SK-N-SH (cell line): ENCODE measurements at regions of chr12 and their contacts with region 1.

Region 1: DNA sequence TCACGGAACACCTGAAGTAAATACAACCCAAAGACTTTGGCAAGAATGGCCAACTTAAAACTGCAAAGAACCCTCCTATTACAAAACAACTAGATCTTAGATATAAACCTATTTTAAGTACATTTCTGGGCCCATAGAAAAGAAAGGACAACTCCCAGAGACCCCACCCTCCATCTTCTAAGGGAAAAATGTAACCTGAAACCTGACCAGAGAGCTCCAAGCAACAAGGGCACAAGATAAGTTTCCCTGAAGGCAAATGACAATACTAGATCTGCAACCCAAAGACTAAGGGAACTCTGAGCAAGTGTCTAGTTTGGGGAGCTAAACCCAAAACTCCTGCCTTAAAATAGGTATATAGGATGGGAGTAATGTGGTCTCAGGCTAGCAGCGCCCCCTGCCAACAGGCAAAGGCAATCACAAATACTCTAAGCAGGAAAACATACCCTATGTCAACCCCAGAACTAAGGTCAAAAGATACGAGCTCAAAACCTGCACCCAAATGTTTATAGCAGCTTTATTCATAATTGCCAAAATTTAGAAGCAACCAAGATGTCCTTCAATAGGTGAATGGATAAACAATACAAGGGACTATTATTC is 218.9 kb downstream of the ITPR2 start:
- DNase-seq: peak; percentile 45
- H3K4me3 ChIP-seq: no peak overlapping the region; a peak in 1 of 4 replicates
- H3K27ac ChIP-seq: no peak overlapping the region
- H3K4me1 ChIP-seq: peaks cover 0 to 5% of the 10 kb centered on the region in 2 experiments; a peak in 1 of 4 replicates
- H3K27me3 ChIP-seq: no peaks in the 10 kb centered on the region
- CTCF ChIP-seq: peak; percentile 69
- EP300 ChIP-seq: no peak
- RAD21 ChIP-seq: peak; percentile 82

Region 2: GRCh38 chr12:26126340-26127284 is 487.5 kb before region 1 on chr12:
- CTCF ChIA-PET with region 1: interaction called, 56 read pairs
- POLR2A ChIA-PET with region 1: interaction called, 3 read pairs
- DNase-seq: peak; percentile 90
- H3K4me3 ChIP-seq: peak overlapping the region; percentile 65 to 83
- H3K27ac ChIP-seq: peak overlapping the region; percentile 69 to 96
- H3K4me1 ChIP-seq: peaks cover 5 to 21% of the 10 kb centered on the region in 2 experiments; a peak in 3 of 4 replicates
- H3K27me3 ChIP-seq: no peaks in the 10 kb centered on the region
- CTCF ChIP-seq: peak; percentile 22; the same call in 1 of the 2 replicates
- EP300 ChIP-seq: no peak
- RAD21 ChIP-seq: peak; percentile 33; the same call in 1 of the 2 replicates

Region 3: DNA sequence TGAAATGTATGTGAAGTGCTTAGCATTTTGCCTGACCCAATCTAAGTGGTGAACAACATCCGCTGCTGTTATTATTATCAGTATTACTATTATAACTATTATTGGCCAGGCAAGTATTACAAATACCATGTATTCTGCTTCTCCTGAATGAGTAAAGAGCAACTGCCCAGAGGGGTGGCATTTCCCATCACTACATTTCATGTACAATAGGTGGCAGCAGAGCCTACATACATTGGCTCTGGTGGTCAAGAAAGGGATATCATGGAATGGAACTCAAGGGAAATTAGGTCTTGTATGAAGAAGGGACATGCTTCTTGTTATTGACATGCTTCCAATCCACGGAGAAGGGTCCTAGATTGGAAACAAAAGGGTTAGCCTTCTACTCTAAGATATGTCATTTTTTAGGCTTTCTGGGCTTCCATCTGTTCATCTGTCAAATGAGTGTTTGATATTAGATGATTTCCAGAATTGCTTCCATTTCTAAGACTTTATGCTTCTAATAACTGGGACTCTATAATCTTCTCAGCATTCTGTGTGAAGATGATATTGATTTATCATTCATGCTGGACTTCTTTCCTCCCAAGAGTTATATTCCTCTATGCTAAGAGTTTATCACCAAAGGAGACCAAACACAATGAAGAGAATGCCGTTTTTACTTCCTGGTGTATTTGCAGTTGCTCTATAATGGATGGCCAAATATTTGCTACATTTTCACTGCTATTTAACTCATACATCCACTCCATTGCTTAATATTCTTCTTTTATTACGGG is 179.6 kb before region 1 on chr12:
- CTCF ChIA-PET with region 1: interaction called, 31 read pairs
- POLR2A ChIA-PET with region 1: no interaction called
- DNase-seq: peak; percentile 52
- H3K4me3 ChIP-seq: no peak overlapping the region
- H3K27ac ChIP-seq: no peak overlapping the region
- H3K4me1 ChIP-seq: no peaks in the 10 kb centered on the region
- H3K27me3 ChIP-seq: no peaks in the 10 kb centered on the region
- CTCF ChIP-seq: peak; percentile 72
- EP300 ChIP-seq: no peak
- RAD21 ChIP-seq: peak; percentile 86

Region 4: DNA sequence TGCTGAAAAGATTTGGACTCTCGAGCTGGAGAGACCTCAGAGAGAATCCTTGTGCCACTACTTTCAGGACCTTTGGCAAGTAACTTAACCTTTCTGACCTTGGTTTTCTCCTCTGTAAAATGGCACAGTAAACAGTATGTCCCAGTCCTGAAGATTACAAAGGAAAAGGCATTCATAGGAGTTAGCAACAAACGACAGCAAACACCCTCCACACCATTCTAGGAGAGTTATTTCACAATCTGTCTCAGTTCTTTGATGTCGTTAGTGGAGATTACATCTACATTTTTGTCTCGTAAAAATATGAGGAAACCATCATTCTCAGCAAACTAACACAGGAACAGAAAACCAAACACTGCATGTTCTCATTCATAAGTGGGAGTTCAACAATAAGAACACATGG is 13.2 kb after region 1 on chr12:
- CTCF ChIA-PET with region 1: interaction called, 14 read pairs
- POLR2A ChIA-PET with region 1: no interaction called
- DNase-seq: no peak
- H3K4me3 ChIP-seq: no peak overlapping the region
- H3K27ac ChIP-seq: no peak overlapping the region
- H3K4me1 ChIP-seq: peaks cover 5 to 32% of the 10 kb centered on the region in 2 experiments
- H3K27me3 ChIP-seq: no peaks in the 10 kb centered on the region
- CTCF ChIP-seq: no peak
- EP300 ChIP-seq: no peak
- RAD21 ChIP-seq: no peak

Region 5: DNA sequence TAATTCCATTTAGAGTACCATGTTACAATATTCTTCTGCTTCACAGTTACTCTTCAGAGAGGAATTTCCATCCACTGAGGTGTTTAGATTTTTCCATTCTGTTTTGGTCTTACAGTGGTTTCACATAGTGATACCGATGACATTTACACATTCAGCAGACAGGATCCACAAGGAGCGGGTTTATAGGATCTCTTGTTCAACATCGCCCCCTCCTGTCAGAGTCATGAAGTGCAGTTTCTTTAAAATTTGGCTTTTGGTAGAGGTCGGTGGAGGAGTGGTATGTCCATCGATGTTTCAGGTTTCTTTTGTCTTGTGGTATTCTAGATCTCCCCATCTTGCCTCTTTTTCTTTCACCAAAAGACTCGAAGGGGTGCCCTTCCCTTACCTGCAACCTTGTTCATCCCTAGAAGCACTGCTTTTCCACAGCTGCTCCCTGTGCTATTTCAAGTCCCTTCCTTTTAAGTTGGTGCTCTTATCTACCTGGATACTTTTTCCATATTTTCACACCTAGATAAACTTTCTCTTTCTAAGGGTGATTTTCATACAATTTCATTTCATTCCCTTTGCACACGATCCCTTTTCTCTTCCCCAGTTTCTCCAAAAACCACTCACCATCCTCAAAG is 37.6 kb after region 1 on chr12:
- CTCF ChIA-PET with region 1: interaction called, 11 read pairs
- POLR2A ChIA-PET with region 1: no interaction called
- DNase-seq: peak; percentile 75
- H3K4me3 ChIP-seq: no peak overlapping the region; a peak in 1 of 4 replicates
- H3K27ac ChIP-seq: 0 out of 4 replicates have a peak overlapping the region, but pooled peaks of 1 of the 2 experiments have one; percentile 4
- H3K4me1 ChIP-seq: peaks cover 0 to 17% of the 10 kb centered on the region in 2 experiments; a peak in 2 of 4 replicates
- H3K27me3 ChIP-seq: no peaks in the 10 kb centered on the region
- CTCF ChIP-seq: peak; percentile 86
- EP300 ChIP-seq: no peak
- RAD21 ChIP-seq: peak; percentile 95